Colonic mucosa (tissue), 4 donors: ENCODE measurements at regions of chr1 and their contacts with region 1.

Region 1: DNA sequence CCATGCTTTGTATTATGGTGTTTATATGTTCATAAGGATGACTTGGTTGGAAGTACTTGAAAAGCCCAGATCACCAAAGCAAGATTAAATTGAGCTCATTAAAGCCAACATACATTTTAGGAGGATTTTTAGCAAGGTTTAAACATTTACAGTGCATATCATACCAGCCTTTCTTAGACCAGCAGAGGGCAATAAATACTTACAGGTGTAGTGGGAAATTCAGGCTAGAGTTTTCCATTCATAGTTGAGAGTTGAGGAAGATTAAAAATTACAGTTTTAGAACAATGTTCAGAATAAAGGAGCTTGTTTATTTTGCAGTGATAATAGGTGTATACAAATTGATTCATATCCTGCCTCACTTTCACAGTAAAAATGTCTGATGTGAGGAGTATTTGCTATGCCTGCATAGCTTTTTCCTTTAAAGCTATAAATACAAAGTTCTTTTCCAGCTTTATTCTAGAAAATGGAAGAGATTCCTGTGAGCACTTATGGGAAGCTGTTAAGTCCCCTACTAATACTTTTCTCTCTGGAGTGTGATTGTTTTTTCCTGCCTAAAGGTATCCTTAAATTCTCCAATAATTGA is 35.3 kb downstream of the DTL start:
- DNase-seq: no peak
- H3K4me3 ChIP-seq: no peak overlapping the region
- H3K27ac ChIP-seq: no peak overlapping the region
- H3K4me1 ChIP-seq: no peaks in the 10 kb centered on the region
- H3K27me3 ChIP-seq: no peaks in the 10 kb centered on the region
- CTCF ChIP-seq: peak; percentile 67

Region 2: DNA sequence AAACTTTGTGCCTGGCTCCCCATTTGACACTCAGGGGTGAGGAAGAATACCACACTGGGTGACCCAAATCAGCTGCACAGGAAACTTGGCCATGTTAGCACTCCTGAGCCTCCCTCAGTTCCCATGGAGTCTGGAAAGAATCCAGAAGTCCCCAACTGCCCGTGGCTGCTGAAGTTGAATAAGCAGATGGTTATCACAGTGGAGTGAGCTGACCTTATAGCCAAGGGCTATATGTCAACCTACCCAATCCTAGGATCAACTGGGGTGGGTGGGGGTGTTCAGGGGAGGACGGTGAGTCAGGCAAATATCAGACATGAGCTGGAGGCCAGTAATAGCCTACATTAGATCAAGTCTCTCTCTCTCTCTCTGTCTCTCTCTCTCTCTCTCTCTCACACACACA is 957.2 kb before region 1 on chr1:
- intact Hi-C with region 1: no loop called
- DNase-seq: no peak
- H3K4me3 ChIP-seq: no peak overlapping the region
- H3K27ac ChIP-seq: no peak overlapping the region
- H3K4me1 ChIP-seq: no peaks in the 10 kb centered on the region
- H3K27me3 ChIP-seq: no peaks in the 10 kb centered on the region
- CTCF ChIP-seq: no peak

Region 3: GRCh38 chr1:212132025-212132424 is 61.2 kb after region 1 on chr1:
- intact Hi-C with region 1: no loop called
- DNase-seq: no peak
- H3K4me3 ChIP-seq: no peak overlapping the region
- H3K27ac ChIP-seq: no peak overlapping the region
- H3K4me1 ChIP-seq: no peaks in the 10 kb centered on the region
- H3K27me3 ChIP-seq: no peaks in the 10 kb centered on the region
- CTCF ChIP-seq: no peak

Region 4: GRCh38 chr1:212291505-212292134 is 220.8 kb after region 1 on chr1:
- intact Hi-C with region 1: loop called (anchors 5 kb)
- DNase-seq: no peak
- H3K4me3 ChIP-seq: no peak overlapping the region
- H3K27ac ChIP-seq: no peak overlapping the region
- H3K4me1 ChIP-seq: peaks cover 20% of the 10 kb centered on the region
- H3K27me3 ChIP-seq: no peaks in the 10 kb centered on the region
- CTCF ChIP-seq: peak; percentile 34

Region 5: GRCh38 chr1:212368073-212368484 is 297.3 kb after region 1 on chr1:
- intact Hi-C with region 1: loop called (anchors 5 kb)
- DNase-seq: peak; percentile 65
- H3K4me3 ChIP-seq: no peak overlapping the region
- H3K27ac ChIP-seq: no peak overlapping the region
- H3K4me1 ChIP-seq: no peaks in the 10 kb centered on the region
- H3K27me3 ChIP-seq: no peaks in the 10 kb centered on the region
- CTCF ChIP-seq: peak; percentile 83